CD14-positive monocyte (primary cell): ENCODE measurements at regions of chr5 and their contacts with region 1.

Region 1: GRCh38 chr5:148826053-148826738 is at the start of gene ADRB2:
- DNase-seq: peak; percentile 91 to 96 (median 94)
- H3K4me3 ChIP-seq: peak within 1 kb of the TSS; percentile 67 to 85 (median 85)
- H3K4me3 Mint-ChIP-seq: peak within 1 kb of the TSS; percentile 86 to 96
- H3K27ac ChIP-seq: peak within 1 kb of the TSS; percentile 91 to 96
- H3K27ac Mint-ChIP-seq: peak within 1 kb of the TSS; percentile 91 to 99 (median 96)
- H3K4me1 ChIP-seq: peaks cover 85 to 95% of the 10 kb centered on the region in 2 donors
- H3K4me1 Mint-ChIP-seq: peaks cover 90% of the 10 kb centered on the region
- H3K27me3 ChIP-seq: no peaks in the 10 kb centered on the region
- H3K27me3 Mint-ChIP-seq: no peaks in the 10 kb centered on the region
- CTCF ChIP-seq: no peak
- polyA plus RNA-seq, gene ADRB2: 6.8 to 10.9 (median 10.8) TPM

Region 2: DNA sequence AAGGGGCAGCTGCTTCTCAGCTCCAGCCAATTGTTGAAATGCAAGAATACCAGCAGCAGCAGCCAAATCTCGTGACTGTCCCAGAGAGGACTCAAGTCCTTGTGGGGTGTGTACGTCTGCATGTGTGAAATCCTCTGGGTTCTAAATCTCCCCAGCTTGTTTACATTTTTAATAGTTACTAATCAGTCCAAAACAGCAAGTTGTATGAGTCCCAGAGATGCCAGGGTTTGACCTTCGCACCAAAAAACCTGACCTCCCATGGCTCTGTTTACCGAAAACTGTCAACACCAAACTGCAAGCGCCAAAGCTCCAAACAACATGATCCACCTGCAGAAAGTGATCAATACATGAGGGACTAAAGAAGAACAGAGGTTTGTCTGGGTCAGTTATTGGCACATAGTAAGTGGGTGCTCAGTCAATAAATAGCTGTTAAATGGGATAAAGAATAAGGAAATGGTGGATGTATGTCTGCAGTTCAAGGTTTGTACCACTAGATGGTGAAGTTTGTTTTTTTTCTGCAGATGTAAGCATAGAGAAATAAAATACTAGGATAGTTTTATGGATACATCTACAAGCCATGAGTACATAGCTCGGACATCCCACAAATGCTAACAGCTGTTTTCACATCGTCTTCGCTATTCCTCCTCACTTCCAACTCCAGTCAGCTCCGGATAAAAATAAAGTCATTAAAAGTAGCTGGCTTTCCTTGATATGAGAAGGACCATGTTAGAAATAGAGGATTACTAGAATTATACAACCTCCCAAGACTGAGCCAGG is 85.0 kb before region 1 on chr5:
- intact Hi-C with region 1: loop called (anchors 5 kb)
- DNase-seq: peak; percentile 44 to 71 (median 62)
- H3K4me3 ChIP-seq: peak overlapping the region in 1 of 3 experiments; percentile 62
- H3K4me3 Mint-ChIP-seq: peak overlapping the region in 1 of 2 donors; percentile 61
- H3K27ac ChIP-seq: peak overlapping the region in 1 of 2 donors; percentile 85
- H3K27ac Mint-ChIP-seq: peak overlapping the region; percentile 11 to 91 (median 87)
- H3K4me1 ChIP-seq: peaks cover 29 to 31% of the 10 kb centered on the region in 2 donors
- H3K4me1 Mint-ChIP-seq: peaks cover 34% of the 10 kb centered on the region
- H3K27me3 ChIP-seq: no peaks in the 10 kb centered on the region
- H3K27me3 Mint-ChIP-seq: peaks cover 0 to 3% (median 1%) of the 10 kb centered on the region in 3 donors
- CTCF ChIP-seq: peak; percentile 87

Region 3: GRCh38 chr5:148794729-148795561 is 31.3 kb before region 1 on chr5:
- intact Hi-C with region 1: no loop called
- DNase-seq: peak in 2 of 3 donors; percentile 60 to 81
- H3K4me3 ChIP-seq: no peak overlapping the region
- H3K4me3 Mint-ChIP-seq: no peak overlapping the region
- H3K27ac ChIP-seq: no peak overlapping the region
- H3K27ac Mint-ChIP-seq: peak overlapping the region; percentile 3 to 69 (median 41)
- H3K4me1 ChIP-seq: peaks cover 49 to 61% of the 10 kb centered on the region in 2 donors
- H3K4me1 Mint-ChIP-seq: peaks cover 68% of the 10 kb centered on the region
- H3K27me3 ChIP-seq: no peaks in the 10 kb centered on the region
- H3K27me3 Mint-ChIP-seq: peaks cover 0 to 3% (median 2%) of the 10 kb centered on the region in 3 donors
- CTCF ChIP-seq: no peak

Region 4: DNA sequence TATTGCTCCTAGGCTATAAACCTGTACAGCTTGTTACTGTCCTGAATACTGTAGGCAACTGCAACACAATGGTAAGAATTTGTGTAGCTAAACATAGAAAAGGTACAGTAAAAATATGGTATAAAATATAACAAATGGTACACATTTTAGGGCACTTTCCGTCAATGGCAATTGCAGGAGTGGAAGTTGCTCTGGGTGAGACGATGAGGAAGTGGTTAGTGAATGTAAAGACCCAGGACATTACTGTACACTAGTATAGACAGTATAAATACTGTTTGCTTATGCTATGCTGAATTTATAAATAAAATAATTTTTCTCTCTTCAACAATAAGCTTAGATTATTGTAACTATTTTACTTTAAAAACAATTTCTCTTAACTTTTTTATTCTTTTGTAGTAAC is 15.4 kb before region 1 on chr5:
- intact Hi-C with region 1: loop called (anchors 2 kb)
- DNase-seq: peak in 2 of 3 donors; percentile 49 to 64
- H3K4me3 ChIP-seq: peak overlapping the region in 1 of 3 experiments; percentile 70
- H3K4me3 Mint-ChIP-seq: no peak overlapping the region
- H3K27ac ChIP-seq: peak overlapping the region in 1 of 2 donors; percentile 91
- H3K27ac Mint-ChIP-seq: peak overlapping the region in 3 of 7 donors; percentile 37 to 90 (median 79)
- H3K4me1 ChIP-seq: peaks cover 71 to 75% of the 10 kb centered on the region in 2 donors
- H3K4me1 Mint-ChIP-seq: peaks cover 80% of the 10 kb centered on the region
- H3K27me3 ChIP-seq: no peaks in the 10 kb centered on the region
- H3K27me3 Mint-ChIP-seq: peaks cover 0 to 3% (median 0%) of the 10 kb centered on the region in 3 donors
- CTCF ChIP-seq: no peak

Region 5: DNA sequence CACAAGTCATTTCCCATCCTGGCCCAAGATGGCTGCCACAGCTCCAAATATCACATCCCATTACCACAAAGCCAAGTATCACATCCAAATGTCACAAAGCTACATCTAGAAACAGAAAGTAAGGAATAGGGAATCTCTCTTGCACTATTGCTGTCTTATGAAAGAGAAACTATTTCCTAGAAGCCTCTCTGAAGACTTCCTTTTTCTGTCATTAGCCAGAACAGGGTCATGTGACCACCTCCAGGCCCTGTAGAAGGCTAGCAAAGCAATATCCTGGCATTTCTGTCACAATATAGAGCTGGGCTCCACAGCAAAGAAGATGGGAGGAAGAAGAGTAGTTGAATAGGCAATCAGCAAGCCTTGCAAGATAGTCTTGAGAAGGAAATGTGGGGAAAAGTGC is 137.5 kb after region 1 on chr5:
- intact Hi-C with region 1: loop called in 1 of 2 experiments (anchors 10 kb)
- DNase-seq: peak; percentile 66 to 85 (median 85)
- H3K4me3 ChIP-seq: peak overlapping the region in 1 of 3 experiments; percentile 23
- H3K4me3 Mint-ChIP-seq: peak overlapping the region in 1 of 2 donors; percentile 60
- H3K27ac ChIP-seq: peak overlapping the region in 1 of 2 donors; percentile 70
- H3K27ac Mint-ChIP-seq: peak overlapping the region; percentile 74 to 95 (median 86)
- H3K4me1 ChIP-seq: peaks cover 12 to 18% of the 10 kb centered on the region in 2 donors
- H3K4me1 Mint-ChIP-seq: peaks cover 12% of the 10 kb centered on the region
- H3K27me3 ChIP-seq: no peaks in the 10 kb centered on the region
- H3K27me3 Mint-ChIP-seq: peaks cover 0 to 2% (median 0%) of the 10 kb centered on the region in 3 donors
- CTCF ChIP-seq: no peak

Region 6: DNA sequence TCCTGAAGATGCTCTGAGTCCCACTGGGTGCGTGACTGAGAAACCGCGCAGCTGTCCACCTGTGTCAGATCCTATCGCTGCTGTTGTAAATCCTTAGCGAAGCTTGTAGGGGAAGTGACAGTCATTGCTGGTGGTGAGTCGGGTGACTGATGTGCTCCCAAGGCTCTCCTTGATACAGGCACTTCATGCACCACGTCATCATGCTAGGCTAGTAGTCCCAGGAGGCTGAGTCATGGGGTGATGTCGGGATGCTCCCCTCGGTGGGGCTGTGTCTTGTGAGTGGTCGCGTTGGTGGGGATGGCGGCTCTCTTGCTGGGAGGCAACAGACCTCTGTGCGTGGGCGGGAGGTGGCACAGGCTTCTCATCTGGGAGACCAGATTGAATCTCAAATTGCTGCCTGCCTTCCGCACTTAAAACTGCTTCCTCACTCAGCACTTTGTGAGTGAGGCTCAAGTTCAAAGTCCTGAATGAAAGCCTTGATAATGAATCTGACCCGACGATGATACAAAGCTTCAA is 640.3 kb after region 1 on chr5:
- intact Hi-C with region 1: no loop called
- DNase-seq: no peak
- H3K4me3 ChIP-seq: no peak overlapping the region
- H3K4me3 Mint-ChIP-seq: no peak overlapping the region
- H3K27ac ChIP-seq: no peak overlapping the region
- H3K27ac Mint-ChIP-seq: peak overlapping the region in 1 of 7 donors; percentile 62
- H3K4me1 ChIP-seq: no peaks in the 10 kb centered on the region
- H3K4me1 Mint-ChIP-seq: peaks cover 2% of the 10 kb centered on the region
- H3K27me3 ChIP-seq: no peaks in the 10 kb centered on the region
- H3K27me3 Mint-ChIP-seq: peaks cover 2 to 12% (median 3%) of the 10 kb centered on the region in 3 donors
- CTCF ChIP-seq: no peak